Sciatic nerve (tissue), 2 donors: ENCODE measurements at regions of chr22 and their contacts with region 1.

Region 1: GRCh38 chr22:39684702-39685281 is 114.2 kb downstream of the CACNA1I start:
- DNase-seq: no peak
- ATAC-seq: no peak

Region 2: GRCh38 chr22:39601180-39601535 is 83.6 kb before region 1 on chr22:
- intact Hi-C with region 1: no loop called
- DNase-seq: no peak
- ATAC-seq: no peak

Region 3: GRCh38 chr22:39868741-39869140 is 183.9 kb after region 1 on chr22:
- intact Hi-C with region 1: loop called (anchors 5 kb)
- DNase-seq: no peak
- ATAC-seq: no peak